Activated CD4-positive, alpha-beta T cell treated with anti-CD3 and anti-CD28 coated beads for 36 hours (primary cell): ENCODE measurements at regions of chr17 and their contacts with region 1.

Region 1: GRCh38 chr17:77088455-77089123 is 52.2 kb upstream of the SEC14L1 start:
- DNase-seq: peak; percentile 89
- ATAC-seq: peak; percentile 83
- H3K4me3 Mint-ChIP-seq: peak overlapping the region; percentile 98
- H3K27ac Mint-ChIP-seq: peak overlapping the region; percentile 97
- H3K4me1 Mint-ChIP-seq: peaks cover 50% of the 10 kb centered on the region
- H3K27me3 Mint-ChIP-seq: no peaks in the 10 kb centered on the region

Region 2: DNA sequence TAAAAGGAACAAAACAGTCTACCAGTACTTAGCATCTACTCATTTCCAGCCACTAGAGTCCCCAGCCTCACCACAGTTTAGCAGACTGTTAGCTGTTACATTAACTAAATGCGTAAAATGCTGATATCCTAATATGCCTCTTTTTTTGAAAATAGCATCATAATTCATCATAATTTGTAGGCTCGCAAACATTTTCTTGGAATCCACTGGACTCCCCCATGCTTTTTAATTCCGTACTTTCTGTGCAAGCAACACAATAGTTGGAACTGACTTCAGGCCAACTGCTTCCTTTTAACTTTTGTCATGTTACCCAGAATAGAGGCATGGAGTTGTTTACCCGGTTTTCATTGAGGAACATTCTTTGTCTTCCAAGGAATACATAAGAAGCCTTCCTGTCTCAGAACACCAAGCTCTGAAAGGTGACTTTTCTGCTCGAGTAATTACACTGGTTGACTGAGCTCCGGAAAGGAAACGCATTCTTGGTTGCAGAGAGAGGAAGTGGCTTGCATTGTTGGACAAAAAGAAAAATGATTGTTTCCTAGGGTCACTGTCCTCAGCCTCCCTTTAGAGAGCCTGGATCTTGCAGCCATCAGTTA is 21.3 kb after region 1 on chr17:
- CTCF ChIA-PET with region 1: interaction called, 12 read pairs
- POLR2A ChIA-PET with region 1: no interaction called
- intact Hi-C with region 1: no loop called
- DNase-seq: no peak
- ATAC-seq: no peak
- H3K4me3 Mint-ChIP-seq: no peak overlapping the region
- H3K27ac Mint-ChIP-seq: peak overlapping the region; percentile 29
- H3K4me1 Mint-ChIP-seq: peaks cover 15% of the 10 kb centered on the region
- H3K27me3 Mint-ChIP-seq: no peaks in the 10 kb centered on the region

Region 3: GRCh38 chr17:77127735-77128361 is 39.3 kb after region 1 on chr17:
- CTCF ChIA-PET with region 1: interaction called, 8 read pairs
- POLR2A ChIA-PET with region 1: no interaction called
- intact Hi-C with region 1: loop called in 1 of 2 experiments (anchors 1 kb)
- DNase-seq: peak; percentile 81
- ATAC-seq: peak; percentile 96
- H3K4me3 Mint-ChIP-seq: peak overlapping the region; percentile 67
- H3K27ac Mint-ChIP-seq: peak overlapping the region; percentile 94
- H3K4me1 Mint-ChIP-seq: peaks cover 30% of the 10 kb centered on the region
- H3K27me3 Mint-ChIP-seq: no peaks in the 10 kb centered on the region

Region 4: DNA sequence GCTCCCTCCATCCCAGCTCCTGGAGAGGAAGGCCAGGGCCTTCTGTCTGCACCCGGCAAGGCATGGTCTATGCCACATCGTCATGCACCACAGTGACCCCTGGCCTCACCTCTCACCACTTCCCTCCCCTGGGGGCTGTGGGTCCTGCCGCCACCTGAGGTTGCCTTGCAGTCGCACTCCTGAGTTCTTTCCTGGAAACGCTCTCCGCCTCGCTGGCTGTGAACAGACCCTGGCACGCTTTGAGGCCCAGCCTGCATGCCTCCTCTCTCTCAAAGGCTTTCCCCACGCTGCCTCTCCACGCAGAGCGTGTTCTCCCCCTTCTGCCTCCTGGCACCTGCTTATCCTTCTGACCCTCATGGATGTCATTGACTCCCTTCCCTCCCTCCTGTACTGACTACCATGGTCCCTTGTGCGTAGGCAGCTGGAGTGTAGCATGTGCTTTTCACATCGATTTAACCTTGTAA is 97.6 kb after region 1 on chr17:
- CTCF ChIA-PET with region 1: interaction called, 3 read pairs
- POLR2A ChIA-PET with region 1: no interaction called
- intact Hi-C with region 1: loop called in 1 of 2 experiments (anchors 2 kb)
- DNase-seq: peak; percentile 51
- ATAC-seq: peak; percentile 18
- H3K4me3 Mint-ChIP-seq: no peak overlapping the region
- H3K27ac Mint-ChIP-seq: no peak overlapping the region
- H3K4me1 Mint-ChIP-seq: peaks cover 24% of the 10 kb centered on the region
- H3K27me3 Mint-ChIP-seq: no peaks in the 10 kb centered on the region